ENCODE measurements at regions of chr11 and their contacts with region 1.

Region 1: GRCh38 chr11:65314501-65315203 is at the start of gene CDC42EP2:
- DNase-seq: peak; percentile 87
- ATAC-seq: peak; percentile 78
- H3K4me3 Mint-ChIP-seq: peak within 1 kb of the TSS; percentile 71
- H3K27ac Mint-ChIP-seq: no peak within 1 kb of the TSS
- H3K4me1 Mint-ChIP-seq: peaks cover 39% of the 10 kb centered on the region
- H3K27me3 Mint-ChIP-seq: peaks cover 35% of the 10 kb centered on the region
- CTCF ChIP-seq: no peak
- total RNA-seq, gene CDC42EP2: 11.0 to 15.2 TPM (median 11.5 TPM) in 3 replicates

Region 2: DNA sequence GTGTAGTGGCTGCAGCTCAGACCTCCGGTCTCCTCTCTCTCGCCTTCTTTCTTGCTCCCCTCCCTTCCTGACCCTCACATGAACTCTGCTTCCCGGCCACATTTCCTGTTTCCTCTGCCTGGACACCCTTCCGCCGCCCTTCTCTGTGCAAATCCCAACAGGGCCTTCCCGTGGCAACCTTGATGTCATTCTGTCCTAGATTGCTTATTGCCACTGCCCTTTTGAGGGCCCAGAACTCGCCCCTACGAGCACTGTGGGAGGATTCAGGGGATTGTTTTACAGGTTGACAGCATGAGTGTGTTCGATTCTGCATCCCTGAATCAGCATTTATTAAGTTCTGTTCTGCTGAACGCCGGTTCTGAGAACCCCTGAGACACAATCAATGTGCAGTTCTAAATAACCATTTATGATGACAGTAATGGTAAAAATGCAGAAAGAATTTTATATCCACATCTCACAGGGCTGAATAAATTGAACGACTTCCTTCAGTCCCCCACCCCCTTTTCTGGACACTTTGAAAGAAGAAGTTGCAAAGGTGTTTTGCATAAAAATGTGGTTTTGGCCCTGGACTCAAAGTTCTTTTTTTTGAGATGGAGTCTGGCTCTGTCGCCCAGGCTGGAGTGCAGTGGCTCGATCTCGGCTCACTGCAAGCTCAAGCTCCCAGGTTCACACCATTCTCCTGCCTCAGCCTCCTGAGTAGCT is 324.3 kb before region 1 on chr11:
- CTCF ChIA-PET with region 1: no interaction called
- POLR2A ChIA-PET with region 1: no interaction called
- DNase-seq: no peak
- ATAC-seq: no peak
- H3K4me3 Mint-ChIP-seq: no peak overlapping the region
- H3K27ac Mint-ChIP-seq: no peak overlapping the region
- H3K4me1 Mint-ChIP-seq: 0 out of 2 replicates have a peak, but pooled peaks cover 5% of the 10 kb centered on the region
- H3K27me3 Mint-ChIP-seq: no peaks in the 10 kb centered on the region; the same call in 1 of the 2 replicates
- CTCF ChIP-seq: no peak

Region 3: GRCh38 chr11:65225279-65226102 is 89.2 kb before region 1 on chr11:
- CTCF ChIA-PET with region 1: interaction called, 12 read pairs
- POLR2A ChIA-PET with region 1: no interaction called
- DNase-seq: peak; percentile 73
- ATAC-seq: peak; percentile 87
- H3K4me3 Mint-ChIP-seq: peak overlapping the region; percentile 81
- H3K27ac Mint-ChIP-seq: peak overlapping the region; percentile 53
- H3K4me1 Mint-ChIP-seq: peaks cover 19% of the 10 kb centered on the region
- H3K27me3 Mint-ChIP-seq: no peaks in the 10 kb centered on the region; the same call in 1 of the 2 replicates
- CTCF ChIP-seq: no peak

Region 4: GRCh38 chr11:65290448-65291165 is 24.0 kb before region 1 on chr11:
- CTCF ChIA-PET with region 1: interaction called, 17 read pairs
- POLR2A ChIA-PET with region 1: no interaction called
- DNase-seq: no peak
- ATAC-seq: no peak
- H3K4me3 Mint-ChIP-seq: no peak overlapping the region
- H3K27ac Mint-ChIP-seq: no peak overlapping the region
- H3K4me1 Mint-ChIP-seq: peaks cover 5% of the 10 kb centered on the region
- H3K27me3 Mint-ChIP-seq: no peaks in the 10 kb centered on the region
- CTCF ChIP-seq: no peak

Region 5: GRCh38 chr11:65329944-65330403 is 15.3 kb after region 1 on chr11:
- CTCF ChIA-PET with region 1: interaction called, 232 read pairs
- POLR2A ChIA-PET with region 1: interaction called, 11 read pairs
- DNase-seq: peak; percentile 90
- ATAC-seq: peak; percentile 31
- H3K4me3 Mint-ChIP-seq: peak overlapping the region; percentile 31; the same call in 1 of the 2 replicates
- H3K27ac Mint-ChIP-seq: no peak overlapping the region
- H3K4me1 Mint-ChIP-seq: peaks cover 13% of the 10 kb centered on the region
- H3K27me3 Mint-ChIP-seq: peaks cover 5% of the 10 kb centered on the region
- CTCF ChIP-seq: peak; percentile 79

Region 6: DNA sequence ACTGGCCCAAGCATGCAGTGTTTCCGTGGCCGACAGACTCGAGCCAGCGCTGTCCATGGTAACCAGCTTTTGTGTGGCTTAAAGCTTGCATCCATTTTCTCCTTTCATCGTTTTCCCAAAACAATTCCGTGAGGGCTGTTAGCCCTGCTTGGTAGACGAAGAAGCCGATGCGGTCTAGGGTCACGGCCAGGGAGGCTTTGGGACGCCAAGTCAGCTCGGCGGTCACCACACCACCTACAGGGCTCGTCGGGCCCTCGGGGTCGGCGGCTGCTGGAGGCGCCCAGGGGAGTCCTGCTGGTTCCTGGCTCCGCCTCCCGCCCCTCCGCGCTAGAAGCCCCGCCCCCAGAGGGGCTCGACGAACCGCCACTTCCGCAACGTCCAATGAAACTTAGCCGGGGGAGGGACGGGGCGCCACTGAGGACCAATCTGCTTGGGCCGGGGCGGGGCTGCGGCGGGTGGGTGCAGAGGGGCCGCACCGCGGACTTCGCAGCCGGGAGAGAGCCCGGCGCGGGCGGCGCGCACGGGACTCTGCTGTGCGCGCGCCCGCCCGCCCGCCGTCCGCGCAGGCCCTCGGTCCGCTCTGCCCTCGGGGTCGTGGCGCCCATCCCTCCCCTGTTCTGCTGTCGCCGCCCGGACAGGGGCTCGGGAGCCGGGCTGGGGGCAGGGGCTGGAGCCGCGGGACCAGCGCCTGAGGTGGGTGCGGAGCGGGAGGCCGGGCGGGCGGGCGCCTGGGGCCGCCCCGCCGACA is 39.8 kb after region 1 on chr11 and contains the start of gene TIGD3:
- CTCF ChIA-PET with region 1: interaction called, 29 read pairs
- POLR2A ChIA-PET with region 1: no interaction called
- DNase-seq: peak; percentile 99
- ATAC-seq: peak; percentile 95
- H3K4me3 Mint-ChIP-seq: peak within 1 kb of the TSS; percentile 81
- H3K27ac Mint-ChIP-seq: peak within 1 kb of the TSS; percentile 19; the same call in 1 of the 2 replicates
- H3K4me1 Mint-ChIP-seq: peaks cover 10% of the 10 kb centered on the region
- H3K27me3 Mint-ChIP-seq: peaks cover 30% of the 10 kb centered on the region
- CTCF ChIP-seq: no peak
- total RNA-seq, gene TIGD3: 1.9 to 2.3 TPM (median 2.1 TPM) in 3 replicates

Region 7: GRCh38 chr11:65432686-65433582 is 118.3 kb after region 1 on chr11:
- CTCF ChIA-PET with region 1: no interaction called
- POLR2A ChIA-PET with region 1: no interaction called
- DNase-seq: no peak
- ATAC-seq: peak; percentile 45; the same call in 1 of the 2 replicates
- H3K4me3 Mint-ChIP-seq: no peak overlapping the region
- H3K27ac Mint-ChIP-seq: no peak overlapping the region
- H3K4me1 Mint-ChIP-seq: peaks cover 26% of the 10 kb centered on the region
- H3K27me3 Mint-ChIP-seq: no peaks in the 10 kb centered on the region
- CTCF ChIP-seq: no peak